Activated CD4-positive, alpha-beta memory T cell treated with anti-CD3 and anti-CD28 coated beads for 36 hours (primary cell): ENCODE measurements at regions of chr19 and their contacts with region 1.

Region 1: GRCh38 chr19:30006207-30006606 is 64.2 kb downstream of the URI1 start:
- DNase-seq: no peak
- H3K4me3 Mint-ChIP-seq: no peak overlapping the region
- H3K27ac Mint-ChIP-seq: no peak overlapping the region
- H3K4me1 Mint-ChIP-seq: peaks cover 42% of the 10 kb centered on the region
- H3K27me3 Mint-ChIP-seq: no peaks in the 10 kb centered on the region

Region 2: DNA sequence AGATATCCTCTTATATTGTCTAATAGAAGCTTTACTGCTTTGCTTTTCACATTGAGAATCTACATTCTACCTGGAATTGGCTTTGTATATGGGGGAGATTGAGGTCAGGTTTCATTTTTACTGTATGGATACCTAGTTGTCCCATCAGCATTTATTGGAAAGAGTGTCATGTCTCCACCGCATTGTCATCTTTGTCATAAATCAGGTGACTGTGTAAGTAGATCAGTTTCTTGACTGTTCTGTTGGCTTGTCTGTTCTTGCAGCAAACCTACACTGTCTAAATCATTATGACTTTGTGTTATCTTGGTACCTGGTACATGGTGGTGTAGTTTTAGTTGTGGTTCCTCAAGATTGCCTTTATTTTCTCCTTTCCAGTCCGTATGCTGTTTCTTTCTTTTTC is 58.3 kb before region 1 on chr19:
- CTCF ChIA-PET with region 1: no interaction called
- POLR2A ChIA-PET with region 1: no interaction called
- intact Hi-C with region 1: loop called (anchors 5 kb)
- DNase-seq: no peak
- H3K4me3 Mint-ChIP-seq: peak overlapping the region; percentile 59
- H3K27ac Mint-ChIP-seq: peak overlapping the region; percentile 95
- H3K4me1 Mint-ChIP-seq: peaks cover 79% of the 10 kb centered on the region
- H3K27me3 Mint-ChIP-seq: no peaks in the 10 kb centered on the region